ENCODE measurements at regions of chr2 and their contacts with region 1.

Region 1: GRCh38 chr2:98479959-98480524 is 35.4 kb downstream of the INPP4A start:
- DNase-seq: no peak
- H3K4me3 ChIP-seq: no peak overlapping the region
- H3K27ac ChIP-seq: peak overlapping the region in 1 of 2 donors; percentile 13
- H3K4me1 ChIP-seq: peaks cover 3 to 14% of the 10 kb centered on the region in 2 donors
- H3K27me3 ChIP-seq: no peaks in the 10 kb centered on the region
- CTCF ChIP-seq: no peak
- POLR2A ChIP-seq: no peak

Region 2: DNA sequence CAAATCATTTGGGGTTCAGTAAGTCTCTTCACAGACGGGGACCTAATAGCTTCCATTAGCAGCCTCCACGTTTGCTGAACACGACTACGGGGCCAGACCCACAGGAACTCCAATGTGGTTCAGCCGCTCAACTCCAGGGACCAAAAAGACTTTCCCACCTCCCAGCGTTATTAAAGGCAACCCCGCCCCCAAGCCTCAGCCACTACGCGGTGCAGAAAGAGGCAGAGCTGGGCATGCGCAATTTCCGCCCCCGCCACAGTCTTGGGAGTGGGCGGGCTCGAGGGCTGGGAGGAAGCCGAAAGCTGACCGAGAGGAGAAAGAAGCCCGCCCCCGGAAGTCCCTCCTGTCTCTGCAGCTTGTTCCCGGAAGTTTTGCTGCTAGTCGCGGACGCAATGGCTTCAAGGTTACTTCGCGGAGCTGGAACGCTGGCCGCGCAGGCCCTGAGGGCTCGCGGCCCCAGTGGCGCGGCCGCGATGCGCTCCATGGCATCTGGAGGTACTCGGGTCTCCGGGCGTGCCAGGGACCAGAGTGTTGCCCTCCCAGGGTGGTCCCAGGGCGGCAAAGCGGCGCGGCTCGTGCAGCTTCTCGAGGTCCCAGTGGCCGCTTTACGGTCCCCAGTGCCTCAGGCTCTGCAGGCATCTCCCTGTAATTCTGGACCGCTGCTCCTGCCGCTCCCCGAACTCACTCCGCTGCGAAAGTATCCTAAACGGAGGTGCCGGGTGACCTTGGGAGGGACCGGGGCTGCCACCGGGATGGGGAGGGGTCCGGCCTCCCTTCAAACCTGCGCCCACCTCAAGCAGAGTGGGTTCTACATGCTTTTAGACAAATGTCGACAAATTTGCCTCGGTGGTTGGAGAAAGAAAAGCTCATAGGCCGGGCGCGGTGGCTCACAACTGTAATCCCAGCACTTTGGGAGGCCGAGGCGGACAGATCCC is 834.1 kb before region 1 on chr2 and contains the start of gene COX5B:
- intact Hi-C with region 1: loop called (anchors 10 kb)
- DNase-seq: peak; percentile 99
- H3K4me3 ChIP-seq: peak within 1 kb of the TSS; percentile 93 to 99 (median 97)
- H3K27ac ChIP-seq: peak within 1 kb of the TSS; percentile 95 to 99
- H3K4me1 ChIP-seq: peaks cover 0 to 5% of the 10 kb centered on the region in 2 donors
- H3K27me3 ChIP-seq: no peaks in the 10 kb centered on the region
- CTCF ChIP-seq: peak in 1 of 3 donors; percentile 9
- POLR2A ChIP-seq: peak; percentile 79
- total RNA-seq, gene COX5B: 352 to 396 (median 362) TPM

Measured in breast epithelium (tissue), 4 donors.